Activated B cell treated with CpG ODN at 0.5 μM for 24 hours (primary cell): ENCODE measurements at regions of chr12 and their contacts with region 1.

Region 1: DNA sequence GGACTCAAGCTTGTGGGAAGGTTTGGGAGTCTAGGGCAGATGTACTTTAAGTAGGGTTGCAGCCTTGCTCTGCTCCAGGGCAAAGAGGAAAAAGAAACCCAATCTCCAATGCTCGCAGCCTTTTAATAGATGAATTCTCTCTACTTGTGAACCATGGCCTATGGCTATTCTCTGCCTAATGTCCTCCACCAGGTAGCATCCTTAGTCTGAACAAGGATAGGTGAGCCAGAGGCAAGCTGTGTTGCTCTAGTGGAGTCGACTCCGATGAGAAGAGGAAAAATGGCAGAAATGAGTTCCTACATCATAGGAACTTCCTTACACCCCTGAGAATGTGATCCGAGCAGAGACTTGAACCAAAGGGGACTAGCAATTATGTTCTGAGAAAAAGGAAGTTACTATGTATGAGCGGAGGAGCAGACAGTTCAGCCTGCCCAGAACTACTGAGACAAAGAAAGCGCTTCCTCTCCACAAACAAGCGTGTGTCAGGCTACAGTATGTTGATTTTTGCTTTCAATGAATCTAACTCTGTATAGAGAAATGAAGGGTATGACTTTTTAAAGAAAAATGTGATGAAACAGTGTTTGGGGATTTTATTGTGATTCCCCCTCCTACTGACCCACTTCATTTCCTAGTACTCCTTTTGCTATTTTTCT is 153.6 kb upstream of the ARID2 start:
- DNase-seq: no peak
- ATAC-seq: peak; percentile 76
- H3K4me3 Mint-ChIP-seq: peak overlapping the region; percentile 61
- H3K27ac Mint-ChIP-seq: peak overlapping the region; percentile 78
- H3K4me1 Mint-ChIP-seq: peaks cover 44% of the 10 kb centered on the region
- H3K27me3 Mint-ChIP-seq: no peaks in the 10 kb centered on the region
- CTCF ChIP-seq: no peak

Region 2: DNA sequence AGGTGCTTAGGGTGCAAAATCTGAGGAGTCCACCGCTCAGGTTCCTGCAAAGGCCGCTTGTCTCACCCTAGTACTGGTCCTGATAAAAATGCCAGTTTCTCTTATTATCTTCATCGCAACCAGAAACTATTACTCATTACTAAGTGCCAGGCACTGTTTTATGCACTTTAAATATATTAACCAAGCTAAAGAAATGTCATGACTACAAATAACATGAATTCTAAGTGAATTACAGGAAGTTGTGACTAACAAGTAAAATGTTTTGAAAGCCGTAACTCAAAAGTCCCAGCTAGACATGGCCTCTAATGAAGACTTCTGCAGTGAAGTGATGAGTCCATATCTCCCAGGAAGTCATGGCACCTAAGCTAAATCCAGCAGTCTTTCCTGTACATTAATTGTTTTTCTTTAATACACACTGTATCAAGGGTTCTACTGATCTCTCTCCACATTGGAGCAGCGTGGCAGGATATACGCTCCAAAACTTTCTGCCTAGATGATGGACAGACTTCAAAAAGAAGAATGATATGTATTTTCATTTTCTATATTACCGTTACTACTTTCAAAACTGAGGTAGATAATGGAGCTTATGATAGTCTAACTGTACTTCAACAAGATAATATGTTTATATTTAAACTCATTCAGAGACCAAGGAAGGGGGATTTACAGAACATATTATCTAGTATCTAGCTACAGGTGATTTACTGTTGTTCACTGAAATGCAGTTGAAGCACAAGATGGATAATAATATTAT is 36.3 kb after region 1 on chr12:
- CTCF ChIA-PET with region 1: no interaction called
- POLR2A ChIA-PET with region 1: no interaction called
- intact Hi-C with region 1: loop called (anchors 5 kb)
- DNase-seq: no peak
- ATAC-seq: no peak
- H3K4me3 Mint-ChIP-seq: no peak overlapping the region
- H3K27ac Mint-ChIP-seq: no peak overlapping the region
- H3K4me1 Mint-ChIP-seq: peaks cover 17% of the 10 kb centered on the region
- H3K27me3 Mint-ChIP-seq: no peaks in the 10 kb centered on the region
- CTCF ChIP-seq: no peak